IMR-90 (cell line): ENCODE measurements at regions of chr12 and their contacts with region 1.

Region 1: DNA sequence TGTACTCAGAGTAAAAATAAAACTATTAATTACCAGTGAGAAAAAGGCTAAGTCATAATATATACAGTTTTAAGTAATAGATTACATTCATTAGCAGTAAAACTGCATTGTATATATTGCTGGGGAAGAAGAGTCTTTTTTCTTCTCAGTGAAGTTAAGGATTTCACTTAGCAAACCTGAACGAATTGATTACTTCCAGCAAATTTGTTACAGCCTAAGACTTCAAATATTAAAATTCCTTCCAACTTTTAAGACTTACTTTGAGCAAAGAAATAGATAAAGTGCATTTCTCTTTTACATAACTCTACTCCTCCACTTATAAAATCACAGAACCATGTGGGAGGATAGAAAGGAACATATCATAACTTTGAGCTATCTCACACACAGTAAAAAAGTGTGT is 43.3 kb downstream of the PIK3C2G start:
- DNase-seq: no peak
- ATAC-seq: no peak
- H3K4me3 ChIP-seq: no peak overlapping the region
- H3K27ac ChIP-seq: no peak overlapping the region
- H3K4me1 ChIP-seq: no peaks in the 10 kb centered on the region
- H3K27me3 ChIP-seq: no peaks in the 10 kb centered on the region
- CTCF ChIP-seq: no peak
- POLR2A ChIP-seq: no peak
- RAD21 ChIP-seq: no peak

Region 2: DNA sequence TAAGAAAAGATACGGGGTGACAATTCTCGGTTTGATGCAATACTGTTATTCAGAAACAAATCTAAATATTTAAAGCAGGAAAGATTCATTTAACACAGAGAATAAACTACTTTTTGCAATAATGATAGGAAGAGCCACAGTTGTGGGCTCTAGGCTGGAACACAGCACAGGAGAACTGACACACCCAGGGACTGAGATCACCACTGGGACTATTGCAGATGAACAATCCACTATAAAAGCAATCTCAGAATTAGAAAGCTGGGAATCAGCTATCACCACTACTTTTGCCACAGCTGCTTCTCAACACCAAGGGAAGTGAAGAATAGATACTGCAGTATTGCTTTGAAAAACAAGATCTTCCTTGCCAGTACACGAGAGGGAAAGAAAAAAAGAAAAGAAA is 47.4 kb before region 1 on chr12:
- CTCF ChIA-PET with region 1: no interaction called
- POLR2A ChIA-PET with region 1: no interaction called
- dilution Hi-C with region 1: no loop called
- in situ Hi-C with region 1: no loop called
- intact Hi-C with region 1: loop called (anchors 5 kb)
- DNase-seq: no peak
- ATAC-seq: no peak
- H3K4me3 ChIP-seq: no peak overlapping the region
- H3K27ac ChIP-seq: no peak overlapping the region
- H3K4me1 ChIP-seq: no peaks in the 10 kb centered on the region
- H3K27me3 ChIP-seq: no peaks in the 10 kb centered on the region
- CTCF ChIP-seq: no peak
- POLR2A ChIP-seq: no peak
- RAD21 ChIP-seq: no peak

Region 3: GRCh38 chr12:18320036-18320617 is 15.5 kb after region 1 on chr12:
- CTCF ChIA-PET with region 1: interaction called, 10 read pairs
- POLR2A ChIA-PET with region 1: no interaction called
- dilution Hi-C with region 1: no loop called
- in situ Hi-C with region 1: no loop called
- intact Hi-C with region 1: no loop called
- DNase-seq: peak; percentile 69
- ATAC-seq: peak; percentile 89
- H3K4me3 ChIP-seq: no peak overlapping the region
- H3K27ac ChIP-seq: no peak overlapping the region
- H3K4me1 ChIP-seq: no peaks in the 10 kb centered on the region; the same call in 1 of the 2 replicates
- H3K27me3 ChIP-seq: no peaks in the 10 kb centered on the region
- CTCF ChIP-seq: peak; percentile 40
- POLR2A ChIP-seq: no peak
- RAD21 ChIP-seq: peak; percentile 39